GM12878 (cell line): ENCODE measurements at regions of chr1 and their contacts with region 1.

Region 1: DNA sequence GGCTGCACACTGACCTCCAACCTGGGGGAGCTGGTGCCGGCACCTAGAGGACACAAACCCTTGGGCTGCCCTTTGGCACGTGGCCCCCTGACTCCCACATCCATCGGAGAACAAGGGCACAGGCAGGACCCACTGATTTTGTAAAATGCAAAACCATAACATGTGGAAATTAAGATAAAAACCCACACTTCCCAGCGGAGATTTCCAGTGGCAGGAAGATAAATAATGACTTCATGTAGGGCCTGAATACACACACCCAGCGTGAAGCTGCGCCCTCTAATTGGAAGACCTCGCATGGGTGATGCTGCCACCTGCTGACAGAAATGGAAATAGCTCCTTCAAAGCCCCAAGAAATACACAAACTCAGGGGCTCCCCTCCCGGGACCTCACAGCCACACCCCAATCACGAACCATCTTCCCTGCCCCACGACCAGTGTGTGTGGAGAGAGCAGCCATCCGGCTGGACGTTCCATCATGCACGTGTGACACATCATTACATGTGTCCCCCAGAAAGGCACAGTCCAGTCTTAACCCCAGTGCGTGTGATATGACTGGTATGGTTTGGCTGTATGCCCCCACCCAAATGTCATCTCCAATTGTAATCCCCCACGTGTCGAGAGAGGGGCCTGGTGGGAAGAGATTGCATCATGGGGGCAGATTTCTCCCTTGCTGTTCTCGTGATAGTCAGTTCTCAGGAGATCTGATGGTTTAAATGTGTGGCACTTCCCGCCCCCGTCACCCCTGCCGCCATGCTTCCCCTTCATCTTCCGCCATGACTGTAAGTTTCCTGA is 5.7 kb upstream of the TPRG1L start:
- DNase-seq: peak; percentile 11
- ATAC-seq: peak; percentile 89
- H3K4me3 ChIP-seq: no peak overlapping the region
- H3K27ac ChIP-seq: no peak overlapping the region
- H3K4me1 ChIP-seq: peaks cover 5% of the 10 kb centered on the region; the same call in 1 of the 2 replicates
- H3K27me3 ChIP-seq: peaks cover 0 to 2% of the 10 kb centered on the region in 2 experiments; a peak in 2 of 4 replicates
- CTCF ChIP-seq: peak; percentile 76 to 89 (median 79)
- EP300 ChIP-seq: no peak
- POLR2A ChIP-seq: no peak
- RAD21 ChIP-seq: peak; percentile 71

Region 2: DNA sequence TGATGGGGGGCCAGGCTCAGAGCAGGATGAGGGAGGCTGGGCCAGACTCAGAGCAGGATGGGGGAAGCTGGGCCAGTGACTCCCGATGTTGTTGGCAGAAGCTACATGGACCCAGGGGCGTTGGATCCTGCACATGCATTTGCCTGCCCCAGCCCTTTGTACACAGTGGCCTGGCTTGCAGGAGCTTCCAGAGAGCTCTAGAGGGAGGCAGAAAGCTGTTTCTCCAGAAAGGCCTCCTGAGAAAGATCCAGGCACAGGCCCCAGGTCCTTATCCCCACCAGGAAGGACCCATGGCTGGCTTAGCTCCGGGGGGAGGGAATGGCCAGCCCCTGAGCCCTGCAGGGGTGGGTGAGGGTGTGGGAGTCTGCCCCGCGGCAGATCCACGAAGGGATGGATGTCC is 704.4 kb before region 1 on chr1:
- CTCF ChIA-PET with region 1: no interaction called
- POLR2A ChIA-PET with region 1: no interaction called
- RAD21 ChIA-PET with region 1: no interaction called
- SMC1A ChIA-PET with region 1: no interaction called
- in situ Hi-C with region 1: no loop called
- intact Hi-C with region 1: no loop called
- DNase-seq: no peak
- ATAC-seq: no peak
- H3K4me3 ChIP-seq: no peak overlapping the region
- H3K27ac ChIP-seq: no peak overlapping the region
- H3K4me1 ChIP-seq: no peaks in the 10 kb centered on the region
- H3K27me3 ChIP-seq: no peaks in the 10 kb centered on the region
- CTCF ChIP-seq: no peak
- EP300 ChIP-seq: no peak
- POLR2A ChIP-seq: no peak
- RAD21 ChIP-seq: no peak

Region 3: DNA sequence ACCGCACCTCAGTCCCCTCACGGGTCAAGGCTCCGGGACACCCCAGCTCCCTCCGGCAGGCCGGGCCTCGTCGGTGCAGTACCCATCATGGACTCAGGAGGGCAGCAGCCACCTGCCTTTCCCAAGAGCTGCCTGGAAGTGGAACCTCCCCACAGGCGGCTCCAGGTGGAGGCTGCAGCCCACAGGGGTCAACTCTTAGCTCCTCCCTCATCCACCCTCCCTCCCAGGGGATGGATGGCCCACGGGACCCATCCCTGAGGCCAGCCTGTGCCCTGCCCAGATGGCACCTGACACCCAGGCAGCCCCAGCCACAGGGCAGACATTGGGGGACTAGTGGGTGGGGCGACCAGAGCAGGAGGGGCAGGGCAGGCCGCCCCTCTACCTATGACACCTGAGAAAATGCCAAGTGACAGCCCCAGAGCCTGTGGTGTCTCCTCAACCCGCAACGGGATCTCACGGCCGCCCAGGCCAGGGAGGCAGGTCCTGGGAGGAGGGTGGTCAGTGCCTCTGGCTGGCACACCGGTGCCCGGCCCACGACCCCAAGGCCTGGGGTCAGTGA is 165.8 kb before region 1 on chr1:
- CTCF ChIA-PET with region 1: interaction called, 21 read pairs
- POLR2A ChIA-PET with region 1: no interaction called
- RAD21 ChIA-PET with region 1: interaction called, 4 read pairs
- SMC1A ChIA-PET with region 1: no interaction called
- in situ Hi-C with region 1: loop called (anchors 5 kb)
- intact Hi-C with region 1: loop called (anchors 1 kb)
- DNase-seq: peak; percentile 1
- ATAC-seq: peak; percentile 96
- H3K4me3 ChIP-seq: no peak overlapping the region
- H3K27ac ChIP-seq: no peak overlapping the region
- H3K4me1 ChIP-seq: no peaks in the 10 kb centered on the region
- H3K27me3 ChIP-seq: no peaks in the 10 kb centered on the region
- CTCF ChIP-seq: peak; percentile 83 to 95 (median 94)
- EP300 ChIP-seq: no peak
- POLR2A ChIP-seq: no peak
- RAD21 ChIP-seq: peak; percentile 82

Region 4: GRCh38 chr1:3491291-3492246 is 127.5 kb before region 1 on chr1:
- CTCF ChIA-PET with region 1: interaction called, 9 read pairs
- POLR2A ChIA-PET with region 1: no interaction called
- RAD21 ChIA-PET with region 1: interaction called, 5 read pairs
- SMC1A ChIA-PET with region 1: interaction called, 6 read pairs
- in situ Hi-C with region 1: loop called (anchors 10 kb)
- intact Hi-C with region 1: loop called (anchors 1 kb)
- DNase-seq: peak; percentile 3
- ATAC-seq: peak; percentile 98
- H3K4me3 ChIP-seq: no peak overlapping the region
- H3K27ac ChIP-seq: no peak overlapping the region
- H3K4me1 ChIP-seq: no peaks in the 10 kb centered on the region
- H3K27me3 ChIP-seq: no peaks in the 10 kb centered on the region
- CTCF ChIP-seq: peak; percentile 90 to 99 (median 95)
- EP300 ChIP-seq: no peak
- POLR2A ChIP-seq: no peak
- RAD21 ChIP-seq: peak; percentile 63

Region 5: DNA sequence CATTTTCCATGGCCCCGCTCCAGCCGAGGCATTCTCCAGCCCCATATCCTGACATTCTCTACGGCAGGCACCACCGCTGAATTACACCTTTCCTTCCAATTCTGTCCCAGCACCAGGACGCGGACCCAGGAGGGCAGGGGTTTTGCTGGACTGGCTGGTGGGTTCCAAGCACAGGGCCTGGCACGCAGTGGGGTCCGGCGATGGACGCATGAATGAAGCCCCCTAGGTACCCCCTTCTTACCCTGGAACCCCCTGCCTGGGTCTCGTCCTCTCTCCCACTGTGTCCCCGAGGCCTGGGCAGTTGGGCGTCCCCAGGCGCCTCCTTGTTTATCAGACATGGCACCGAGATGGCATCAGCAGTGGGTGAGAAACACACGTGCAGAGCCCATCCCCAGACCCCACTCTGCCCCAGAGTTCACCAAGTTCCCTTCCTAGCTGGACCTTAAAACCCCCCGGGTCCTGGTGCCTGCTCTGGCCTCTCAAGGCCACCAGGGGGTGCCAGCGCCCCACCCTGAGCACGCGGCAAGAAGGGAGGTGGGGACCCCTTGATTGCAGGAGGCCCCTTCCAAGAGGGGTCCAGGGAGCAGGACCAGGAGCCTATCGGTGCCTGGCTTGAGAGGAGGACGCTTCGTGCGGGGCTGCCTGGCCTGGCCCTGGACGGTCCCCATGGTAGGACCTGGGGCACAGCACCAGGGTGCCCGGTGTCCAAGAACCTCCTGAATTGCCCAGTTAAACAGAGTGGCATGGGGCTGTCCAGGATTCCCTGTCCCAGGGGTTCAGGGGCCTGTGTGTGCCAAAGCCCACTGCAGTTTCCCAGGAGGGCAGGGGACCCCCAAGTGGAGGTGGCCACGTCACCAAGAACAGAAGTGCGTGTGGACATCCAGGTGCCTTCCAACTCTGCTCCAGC is 53.9 kb before region 1 on chr1:
- CTCF ChIA-PET with region 1: interaction called, 38 read pairs
- POLR2A ChIA-PET with region 1: interaction called, 4 read pairs
- RAD21 ChIA-PET with region 1: interaction called, 14 read pairs
- SMC1A ChIA-PET with region 1: interaction called, 23 read pairs
- in situ Hi-C with region 1: no loop called
- intact Hi-C with region 1: loop called (anchors 1 kb)
- DNase-seq: no peak
- ATAC-seq: peak; percentile 82
- H3K4me3 ChIP-seq: no peak overlapping the region
- H3K27ac ChIP-seq: no peak overlapping the region
- H3K4me1 ChIP-seq: no peaks in the 10 kb centered on the region
- H3K27me3 ChIP-seq: no peaks in the 10 kb centered on the region; a peak in 2 of 4 replicates
- CTCF ChIP-seq: peak; percentile 91 to 95 (median 92)
- EP300 ChIP-seq: no peak
- POLR2A ChIP-seq: no peak
- RAD21 ChIP-seq: peak; percentile 92

Region 6: GRCh38 chr1:3630161-3630611 is 11.1 kb after region 1 on chr1:
- CTCF ChIA-PET with region 1: interaction called, 15 read pairs
- POLR2A ChIA-PET with region 1: no interaction called
- RAD21 ChIA-PET with region 1: no interaction called
- SMC1A ChIA-PET with region 1: interaction called, 10 read pairs
- in situ Hi-C with region 1: no loop called
- intact Hi-C with region 1: no loop called
- DNase-seq: no peak
- ATAC-seq: no peak
- H3K4me3 ChIP-seq: no peak overlapping the region
- H3K27ac ChIP-seq: no peak overlapping the region
- H3K4me1 ChIP-seq: no peaks in the 10 kb centered on the region
- H3K27me3 ChIP-seq: no peaks in the 10 kb centered on the region
- CTCF ChIP-seq: no peak
- EP300 ChIP-seq: no peak
- POLR2A ChIP-seq: no peak; the same call in 1 of the 2 replicates
- RAD21 ChIP-seq: no peak

Region 7: GRCh38 chr1:3727042-3727824 is 108.2 kb after region 1 on chr1:
- CTCF ChIA-PET with region 1: interaction called, 30 read pairs
- POLR2A ChIA-PET with region 1: no interaction called
- RAD21 ChIA-PET with region 1: interaction called, 12 read pairs
- SMC1A ChIA-PET with region 1: interaction called, 10 read pairs
- in situ Hi-C with region 1: no loop called
- intact Hi-C with region 1: loop called (anchors 1 kb)
- DNase-seq: no peak
- ATAC-seq: peak; percentile 75
- H3K4me3 ChIP-seq: no peak overlapping the region
- H3K27ac ChIP-seq: no peak overlapping the region
- H3K4me1 ChIP-seq: no peaks in the 10 kb centered on the region
- H3K27me3 ChIP-seq: no peaks in the 10 kb centered on the region
- CTCF ChIP-seq: peak; percentile 48 to 50 (median 49); a peak in 5 of 6 replicates
- EP300 ChIP-seq: no peak
- POLR2A ChIP-seq: no peak
- RAD21 ChIP-seq: peak; percentile 47